ENCODE measurements at regions of chr7 and their contacts with region 1.

Region 1: GRCh38 chr7:93055543-93056107 is 62.2 kb downstream of the SAMD9 start:
- DNase-seq: no peak
- H3K4me3 ChIP-seq: no peak overlapping the region
- H3K27ac ChIP-seq: no peak overlapping the region
- H3K4me1 ChIP-seq: no peaks in the 10 kb centered on the region
- H3K27me3 ChIP-seq: no peaks in the 10 kb centered on the region
- CTCF ChIP-seq: peak; percentile 48 to 67 (median 61)
- EP300 ChIP-seq: no peak
- POLR2A ChIP-seq: no peak

Region 2: DNA sequence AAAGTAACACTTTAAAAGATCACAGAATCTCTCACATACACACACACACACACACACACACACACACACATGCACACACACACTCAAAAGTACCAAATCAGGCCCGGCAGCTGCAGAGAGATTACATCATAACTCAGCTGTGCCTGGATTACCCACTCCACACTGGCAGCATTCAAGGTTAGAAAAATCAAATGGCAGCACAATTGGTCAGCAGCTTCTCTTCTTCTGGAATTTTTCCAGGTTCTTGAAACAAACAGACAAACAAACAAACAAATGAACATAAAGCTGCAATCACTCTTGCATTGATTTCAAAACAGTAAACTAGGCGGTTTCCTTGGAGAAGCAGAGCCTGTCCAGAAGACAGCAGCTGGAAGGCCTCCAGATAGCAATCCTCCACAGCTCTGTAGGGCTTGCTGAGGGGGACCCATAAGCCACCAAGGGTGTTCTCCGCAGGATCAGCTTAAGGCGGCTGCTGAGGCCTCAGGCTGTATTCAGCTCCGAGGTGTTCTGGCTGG is 440.9 kb before region 1 on chr7:
- intact Hi-C with region 1: loop called in 1 of 4 experiments (anchors 5 kb)
- DNase-seq: no peak
- H3K4me3 ChIP-seq: no peak overlapping the region
- H3K27ac ChIP-seq: no peak overlapping the region
- H3K4me1 ChIP-seq: no peaks in the 10 kb centered on the region
- H3K27me3 ChIP-seq: no peaks in the 10 kb centered on the region
- CTCF ChIP-seq: no peak
- EP300 ChIP-seq: no peak
- POLR2A ChIP-seq: no peak

Region 3: GRCh38 chr7:92621026-92621540 is 434.5 kb before region 1 on chr7:
- intact Hi-C with region 1: loop called in 3 of 4 experiments (anchors 5 to 10 kb)
- DNase-seq: peak; percentile 49 to 69 (median 53)
- H3K4me3 ChIP-seq: no peak overlapping the region
- H3K27ac ChIP-seq: no peak overlapping the region
- H3K4me1 ChIP-seq: no peaks in the 10 kb centered on the region
- H3K27me3 ChIP-seq: no peaks in the 10 kb centered on the region
- CTCF ChIP-seq: peak; percentile 15 to 71 (median 69)
- EP300 ChIP-seq: no peak
- POLR2A ChIP-seq: no peak

Region 4: DNA sequence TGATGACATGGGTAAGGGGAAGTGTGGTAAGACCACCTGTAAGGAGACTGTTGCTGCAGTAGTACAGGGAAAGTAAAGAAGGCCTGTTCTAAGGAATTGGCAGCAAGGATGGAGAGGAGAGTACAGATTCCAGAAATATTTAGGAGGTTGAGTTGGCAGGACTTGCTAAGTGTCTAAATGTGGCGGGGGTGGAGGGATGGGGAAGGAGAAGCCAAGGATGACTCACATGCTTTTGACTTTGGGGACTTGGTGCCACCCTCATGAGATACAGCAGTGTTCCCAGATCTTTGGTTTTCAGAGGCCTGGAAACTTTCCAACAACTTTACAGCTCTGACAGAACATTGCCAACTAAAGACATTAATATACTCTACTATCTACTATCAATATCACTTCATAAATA is 264.6 kb before region 1 on chr7:
- intact Hi-C with region 1: no loop called
- DNase-seq: no peak
- H3K4me3 ChIP-seq: no peak overlapping the region
- H3K27ac ChIP-seq: no peak overlapping the region
- H3K4me1 ChIP-seq: no peaks in the 10 kb centered on the region
- H3K27me3 ChIP-seq: no peaks in the 10 kb centered on the region
- CTCF ChIP-seq: no peak
- EP300 ChIP-seq: no peak
- POLR2A ChIP-seq: no peak

Region 5: GRCh38 chr7:92833024-92833765 is 222.4 kb before region 1 on chr7:
- intact Hi-C with region 1: loop called in 1 of 4 experiments (anchors 10 kb)
- DNase-seq: peak; percentile 75 to 89 (median 82)
- H3K4me3 ChIP-seq: peak overlapping the region; percentile 55
- H3K27ac ChIP-seq: peak overlapping the region; percentile 13 to 73
- H3K4me1 ChIP-seq: peaks cover 7% of the 10 kb centered on the region
- H3K27me3 ChIP-seq: no peaks in the 10 kb centered on the region
- CTCF ChIP-seq: peak; percentile 77 to 78 (median 78)
- EP300 ChIP-seq: no peak
- POLR2A ChIP-seq: no peak